ENCODE measurements at regions of chr4 and their contacts with region 1.

Region 1: GRCh38 chr4:40369437-40370274 is 34.5 kb downstream of the CHRNA9 start:
- DNase-seq: no peak
- ATAC-seq: no peak
- H3K4me3 Mint-ChIP-seq: no peak overlapping the region
- H3K27ac Mint-ChIP-seq: no peak overlapping the region
- H3K4me1 Mint-ChIP-seq: peaks cover 7% of the 10 kb centered on the region
- H3K27me3 Mint-ChIP-seq: no peaks in the 10 kb centered on the region
- CTCF ChIP-seq: no peak

Region 2: DNA sequence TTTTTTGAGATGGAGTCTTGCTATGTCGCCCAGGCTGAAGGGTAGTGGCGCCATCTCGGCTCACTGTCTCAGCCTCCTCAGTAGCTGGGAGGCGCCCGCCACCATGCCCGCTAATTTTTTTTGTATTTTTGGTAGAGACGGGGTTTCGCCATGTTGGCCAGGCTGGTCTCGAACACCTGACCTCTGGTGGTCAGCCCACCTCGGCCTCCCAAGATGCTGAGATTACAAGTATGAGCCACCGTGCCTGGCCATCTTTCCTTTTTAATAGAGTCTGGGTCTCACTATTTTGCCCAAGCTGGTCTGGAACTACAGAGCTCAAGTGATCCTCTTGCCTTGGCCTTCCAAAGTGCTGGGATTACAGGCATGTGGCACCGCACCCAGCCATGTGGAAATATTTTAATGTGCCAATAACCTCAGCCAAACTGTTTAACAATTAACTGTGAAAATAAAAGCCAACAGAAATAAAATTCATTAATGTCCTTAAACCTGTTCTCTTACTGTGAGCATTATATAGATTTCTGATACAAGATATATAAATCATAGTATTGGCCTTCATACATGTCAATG is 408.3 kb before region 1 on chr4:
- CTCF ChIA-PET with region 1: no interaction called
- POLR2A ChIA-PET with region 1: no interaction called
- intact Hi-C with region 1: no loop called
- DNase-seq: no peak
- ATAC-seq: no peak
- H3K4me3 Mint-ChIP-seq: no peak overlapping the region
- H3K27ac Mint-ChIP-seq: peak overlapping the region; percentile 46
- H3K4me1 Mint-ChIP-seq: peaks cover 59% of the 10 kb centered on the region
- H3K27me3 Mint-ChIP-seq: no peaks in the 10 kb centered on the region
- CTCF ChIP-seq: no peak

Region 3: GRCh38 chr4:40380647-40381046 is 11.0 kb after region 1 on chr4:
- CTCF ChIA-PET with region 1: no interaction called
- POLR2A ChIA-PET with region 1: no interaction called
- intact Hi-C with region 1: no loop called
- DNase-seq: no peak
- ATAC-seq: no peak
- H3K4me3 Mint-ChIP-seq: no peak overlapping the region
- H3K27ac Mint-ChIP-seq: no peak overlapping the region
- H3K4me1 Mint-ChIP-seq: no peaks in the 10 kb centered on the region
- H3K27me3 Mint-ChIP-seq: peaks cover 3% of the 10 kb centered on the region
- CTCF ChIP-seq: no peak

Region 4: DNA sequence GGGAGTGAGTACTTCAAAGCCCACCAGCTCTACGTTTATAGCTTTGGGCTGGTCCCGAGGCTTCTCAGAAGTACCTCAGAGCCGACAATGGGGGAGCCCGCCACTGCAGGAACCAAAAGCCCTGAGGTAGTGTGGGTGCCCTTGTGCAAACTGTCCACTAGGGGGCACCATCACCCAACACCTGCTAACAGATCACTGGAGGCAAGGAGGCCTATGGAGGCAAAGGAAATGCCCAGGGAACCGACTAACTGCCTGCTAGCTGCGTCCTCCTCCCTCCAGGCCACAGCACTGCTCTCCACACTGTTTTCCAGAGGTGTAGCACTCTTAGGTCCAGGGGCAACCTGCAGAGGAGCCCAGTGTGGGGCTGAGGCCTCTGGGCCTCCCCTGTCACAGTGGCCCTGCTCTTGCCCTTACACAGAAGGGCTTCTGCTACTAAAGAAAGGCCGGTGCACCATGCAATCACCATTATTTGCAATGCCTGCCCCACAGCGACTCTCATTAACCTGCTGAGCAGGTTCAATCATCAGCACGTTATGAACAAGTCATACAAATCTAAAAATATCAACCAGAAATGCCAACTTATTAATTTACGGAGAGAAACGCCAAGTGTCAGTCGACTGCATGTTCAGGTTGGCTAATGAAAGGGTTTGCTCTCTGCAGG is 539.2 kb after region 1 on chr4:
- CTCF ChIA-PET with region 1: no interaction called
- POLR2A ChIA-PET with region 1: no interaction called
- intact Hi-C with region 1: loop called (anchors 10 kb)
- DNase-seq: peak; percentile 31
- ATAC-seq: peak; percentile 78
- H3K4me3 Mint-ChIP-seq: peak overlapping the region; percentile 5
- H3K27ac Mint-ChIP-seq: no peak overlapping the region
- H3K4me1 Mint-ChIP-seq: peaks cover 12% of the 10 kb centered on the region
- H3K27me3 Mint-ChIP-seq: no peaks in the 10 kb centered on the region
- CTCF ChIP-seq: no peak